B cell (primary cell): ENCODE measurements at regions of chr5 and their contacts with region 1.

Region 1: DNA sequence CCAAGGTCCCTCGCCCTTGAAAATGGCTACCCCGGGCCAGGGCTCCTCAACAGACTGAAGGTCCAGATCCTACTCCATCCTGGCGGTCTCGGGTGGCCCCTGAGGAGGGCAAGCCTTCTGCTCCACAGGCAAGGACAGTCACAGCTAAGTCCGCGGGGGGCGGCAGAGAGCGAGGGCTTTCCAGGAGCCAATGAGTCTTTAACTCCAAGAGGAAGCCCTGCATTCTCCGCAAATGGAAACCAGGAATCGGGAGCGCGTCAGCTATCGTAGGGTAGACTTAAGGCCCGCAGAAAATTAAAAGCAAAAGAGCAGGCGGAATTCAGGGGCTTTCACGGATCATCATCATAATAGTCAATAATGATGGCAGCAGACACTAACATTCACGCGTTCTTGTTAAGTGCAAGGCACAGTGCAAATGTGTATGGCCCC is 87.8 kb upstream of the TNFAIP8 start:
- DNase-seq: peak; percentile 94
- ATAC-seq: peak; percentile 63
- H3K4me3 ChIP-seq: peak overlapping the region; percentile 79 to 99 (median 96)
- H3K4me3 Mint-ChIP-seq: peak overlapping the region; percentile 98
- H3K27ac ChIP-seq: peak overlapping the region; percentile 83 to 91
- H3K27ac Mint-ChIP-seq: peak overlapping the region; percentile 95
- H3K4me1 ChIP-seq: peaks cover 39 to 40% of the 10 kb centered on the region in 2 donors
- H3K4me1 Mint-ChIP-seq: peaks cover 51% of the 10 kb centered on the region
- H3K27me3 ChIP-seq: no peaks in the 10 kb centered on the region
- H3K27me3 Mint-ChIP-seq: no peaks in the 10 kb centered on the region
- CTCF ChIP-seq: peak; percentile 38

Region 2: GRCh38 chr5:118628660-118629354 is 639.2 kb before region 1 on chr5:
- CTCF ChIA-PET with region 1: no interaction called
- POLR2A ChIA-PET with region 1: no interaction called
- intact Hi-C with region 1: no loop called
- DNase-seq: no peak
- ATAC-seq: no peak
- H3K4me3 ChIP-seq: no peak overlapping the region
- H3K4me3 Mint-ChIP-seq: no peak overlapping the region
- H3K27ac ChIP-seq: no peak overlapping the region
- H3K27ac Mint-ChIP-seq: no peak overlapping the region
- H3K4me1 ChIP-seq: no peaks in the 10 kb centered on the region
- H3K4me1 Mint-ChIP-seq: no peaks in the 10 kb centered on the region
- H3K27me3 ChIP-seq: no peaks in the 10 kb centered on the region
- H3K27me3 Mint-ChIP-seq: no peaks in the 10 kb centered on the region
- CTCF ChIP-seq: no peak

Region 3: DNA sequence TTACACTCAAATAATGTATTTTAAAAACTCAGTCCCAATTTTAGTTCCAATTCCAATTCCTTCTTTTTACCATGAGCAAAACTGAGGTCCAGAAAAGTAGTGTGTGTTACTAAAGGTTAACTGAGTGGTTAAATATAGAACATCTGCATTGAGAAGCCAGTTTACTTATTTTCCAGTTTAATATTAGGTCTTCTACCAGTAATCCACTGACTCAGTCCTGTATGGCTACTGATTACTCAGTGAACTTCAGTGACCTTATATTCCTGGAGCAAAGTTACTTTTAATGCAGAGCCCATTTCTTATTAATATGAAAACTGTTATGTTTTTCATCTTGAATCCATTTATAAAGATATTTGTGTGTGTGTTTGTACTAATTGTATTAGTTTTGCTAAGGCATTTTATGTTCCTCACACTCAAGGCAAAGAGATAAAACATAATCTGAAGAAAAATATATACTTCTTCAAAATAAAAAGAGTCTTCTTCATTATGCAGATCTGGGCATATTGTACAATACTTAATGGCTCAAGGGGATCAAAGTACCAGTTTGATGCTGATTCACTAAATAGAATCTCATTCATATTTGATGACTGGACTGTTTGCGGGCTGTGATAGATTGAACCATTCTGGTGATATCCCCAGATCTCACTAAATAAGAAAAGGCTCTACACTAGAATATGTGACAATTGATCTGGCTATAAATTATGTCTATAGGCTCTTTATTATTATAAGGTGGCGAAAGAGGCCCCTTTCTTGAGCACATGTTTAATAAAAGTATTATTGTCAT is 136.2 kb before region 1 on chr5:
- CTCF ChIA-PET with region 1: no interaction called
- POLR2A ChIA-PET with region 1: no interaction called
- intact Hi-C with region 1: no loop called
- DNase-seq: no peak
- ATAC-seq: no peak
- H3K4me3 ChIP-seq: no peak overlapping the region
- H3K4me3 Mint-ChIP-seq: no peak overlapping the region
- H3K27ac ChIP-seq: no peak overlapping the region
- H3K27ac Mint-ChIP-seq: no peak overlapping the region
- H3K4me1 ChIP-seq: no peaks in the 10 kb centered on the region
- H3K4me1 Mint-ChIP-seq: no peaks in the 10 kb centered on the region
- H3K27me3 ChIP-seq: no peaks in the 10 kb centered on the region
- H3K27me3 Mint-ChIP-seq: no peaks in the 10 kb centered on the region
- CTCF ChIP-seq: no peak

Region 4: DNA sequence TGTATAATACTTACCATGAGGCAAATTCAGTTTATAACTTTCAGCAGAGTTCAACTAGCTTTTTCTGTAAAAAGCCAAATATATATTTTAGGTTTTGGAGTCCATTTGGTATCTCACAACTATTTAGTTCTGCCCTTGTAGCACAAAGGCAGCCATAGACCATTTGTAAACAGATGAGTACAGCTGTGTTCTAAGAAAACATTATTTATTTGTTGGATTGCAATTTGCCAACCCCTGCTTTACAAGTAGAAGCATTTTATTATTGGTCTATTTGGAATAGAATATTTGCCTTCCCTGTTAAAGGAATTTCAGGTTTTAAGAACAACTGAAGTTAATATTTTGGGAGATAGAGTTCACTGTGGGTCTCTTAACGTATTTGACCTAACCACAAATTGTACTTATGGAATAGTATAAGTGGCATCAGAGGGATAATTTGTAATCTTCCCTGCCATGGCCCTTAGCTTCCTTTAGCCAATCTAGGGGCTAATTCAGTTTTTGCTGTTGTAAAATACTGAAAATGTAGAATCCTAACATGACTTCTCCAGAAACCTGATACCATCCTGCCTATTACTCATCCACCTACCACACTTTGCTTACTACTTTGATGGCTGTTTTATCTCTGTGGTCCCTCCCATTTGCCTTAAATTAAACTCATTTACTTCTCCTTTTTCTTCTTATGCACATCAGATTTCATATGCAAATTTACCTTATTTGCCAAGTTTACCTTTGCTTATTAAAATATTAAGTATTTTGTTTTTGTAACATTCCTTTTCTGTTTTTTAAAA is 87.9 kb before region 1 on chr5:
- CTCF ChIA-PET with region 1: no interaction called
- POLR2A ChIA-PET with region 1: no interaction called
- intact Hi-C with region 1: no loop called
- DNase-seq: no peak
- ATAC-seq: no peak
- H3K4me3 ChIP-seq: no peak overlapping the region
- H3K4me3 Mint-ChIP-seq: no peak overlapping the region
- H3K27ac ChIP-seq: no peak overlapping the region
- H3K27ac Mint-ChIP-seq: peak overlapping the region; percentile 22
- H3K4me1 ChIP-seq: peaks cover 3 to 18% of the 10 kb centered on the region in 2 donors
- H3K4me1 Mint-ChIP-seq: peaks cover 19% of the 10 kb centered on the region
- H3K27me3 ChIP-seq: no peaks in the 10 kb centered on the region
- H3K27me3 Mint-ChIP-seq: no peaks in the 10 kb centered on the region
- CTCF ChIP-seq: no peak

Region 5: DNA sequence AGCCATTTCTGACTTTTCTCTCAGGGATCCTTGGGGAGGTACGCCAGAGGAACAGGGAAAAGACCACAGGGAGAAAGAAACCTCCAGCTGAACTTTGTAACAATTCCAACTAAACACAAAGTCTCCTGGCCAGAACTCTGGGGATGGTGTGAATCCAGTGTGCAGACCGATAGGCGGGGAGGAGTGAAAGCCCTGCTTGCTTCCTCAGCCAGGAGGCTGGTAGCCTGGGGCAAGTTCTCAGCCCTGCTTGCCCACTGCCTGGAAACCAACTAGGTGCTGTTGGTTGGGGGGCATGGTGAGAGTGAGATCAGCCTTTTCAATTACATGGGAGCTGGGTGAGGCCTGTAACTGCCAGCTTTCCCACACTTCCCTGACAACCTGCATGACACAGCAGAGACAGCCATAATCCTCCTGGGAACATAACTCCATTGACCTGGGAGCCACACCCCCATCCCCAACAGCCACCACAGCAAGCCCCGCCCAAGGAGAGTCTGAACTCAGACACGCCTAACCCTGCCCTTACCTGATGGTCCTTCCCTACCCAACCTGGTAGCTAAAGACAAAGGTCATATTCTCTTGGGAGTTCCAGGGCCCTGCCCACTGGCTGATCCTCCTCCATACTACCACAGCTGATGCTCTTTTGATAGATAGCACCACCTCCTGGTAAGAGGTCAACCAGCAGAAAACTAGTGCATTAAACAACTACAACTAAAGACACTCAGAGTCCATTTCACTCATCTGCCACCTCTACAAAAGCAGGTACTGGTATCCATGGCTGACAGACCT is 12.2 kb before region 1 on chr5:
- CTCF ChIA-PET with region 1: no interaction called
- POLR2A ChIA-PET with region 1: no interaction called
- intact Hi-C with region 1: no loop called
- DNase-seq: peak; percentile 24
- ATAC-seq: no peak
- H3K4me3 ChIP-seq: no peak overlapping the region
- H3K4me3 Mint-ChIP-seq: no peak overlapping the region
- H3K27ac ChIP-seq: no peak overlapping the region
- H3K27ac Mint-ChIP-seq: peak overlapping the region; percentile 26
- H3K4me1 ChIP-seq: no peaks in the 10 kb centered on the region
- H3K4me1 Mint-ChIP-seq: peaks cover 3% of the 10 kb centered on the region
- H3K27me3 ChIP-seq: no peaks in the 10 kb centered on the region
- H3K27me3 Mint-ChIP-seq: no peaks in the 10 kb centered on the region
- CTCF ChIP-seq: peak; percentile 8

Region 6: DNA sequence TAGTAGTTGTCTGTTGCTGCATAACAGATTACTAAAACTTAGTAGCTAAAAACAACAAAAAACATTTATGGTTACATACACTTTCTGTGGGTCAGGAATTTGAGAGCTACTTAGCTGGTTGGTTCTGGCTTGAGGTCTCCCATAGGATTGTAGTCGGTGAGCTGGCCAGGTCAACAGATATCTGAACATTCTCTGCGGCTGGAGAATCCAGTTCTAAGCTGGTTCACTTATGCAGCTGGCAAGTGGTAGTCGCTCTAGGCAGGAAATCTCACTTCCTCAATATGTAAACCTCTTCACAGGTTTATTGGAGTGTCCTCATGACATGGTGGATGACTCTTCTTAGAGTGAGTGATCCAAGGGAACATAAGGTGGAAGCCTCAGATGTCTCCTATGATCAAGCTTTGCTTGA is 22.2 kb after region 1 on chr5:
- CTCF ChIA-PET with region 1: interaction called, 15 read pairs
- POLR2A ChIA-PET with region 1: interaction called, 7 read pairs
- intact Hi-C with region 1: no loop called
- DNase-seq: peak; percentile 78
- ATAC-seq: peak; percentile 88
- H3K4me3 ChIP-seq: peak overlapping the region in 3 of 5 experiments; percentile 13 to 20 (median 18)
- H3K4me3 Mint-ChIP-seq: peak overlapping the region; percentile 65
- H3K27ac ChIP-seq: peak overlapping the region; percentile 35 to 74
- H3K27ac Mint-ChIP-seq: peak overlapping the region; percentile 90
- H3K4me1 ChIP-seq: peaks cover 70 to 76% of the 10 kb centered on the region in 2 donors
- H3K4me1 Mint-ChIP-seq: peaks cover 83% of the 10 kb centered on the region
- H3K27me3 ChIP-seq: no peaks in the 10 kb centered on the region
- H3K27me3 Mint-ChIP-seq: no peaks in the 10 kb centered on the region
- CTCF ChIP-seq: no peak

Region 7: DNA sequence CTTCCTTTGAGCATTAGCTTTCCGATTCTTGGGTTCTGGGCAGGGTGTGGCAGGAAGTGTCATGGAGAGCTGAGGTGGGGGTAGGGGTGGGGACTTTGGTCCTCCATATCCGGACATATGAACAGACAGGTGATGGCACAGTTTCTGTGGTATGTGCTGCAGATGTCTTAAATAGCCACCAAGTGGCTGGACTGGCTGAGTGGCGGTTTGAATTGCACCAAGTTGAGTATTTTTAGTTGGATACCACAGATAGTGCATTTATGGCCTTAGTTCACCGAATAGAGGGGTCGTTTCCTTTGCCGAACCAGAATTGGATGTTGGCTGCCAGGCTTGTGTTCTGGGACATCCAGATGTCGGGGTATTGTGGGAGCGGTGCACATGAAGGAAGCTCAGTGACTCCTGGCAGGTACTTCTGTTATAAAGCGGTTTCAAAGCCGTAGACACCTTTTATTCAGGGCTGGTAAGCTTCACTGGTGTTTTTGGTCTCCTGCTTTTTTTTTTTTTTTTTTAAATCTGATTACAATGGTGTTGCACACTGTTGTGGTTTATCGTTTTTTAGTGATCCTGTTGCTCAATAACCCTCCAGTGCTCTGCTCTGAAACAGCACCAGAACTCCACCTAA is 72.7 kb after region 1 on chr5:
- CTCF ChIA-PET with region 1: interaction called, 7 read pairs
- POLR2A ChIA-PET with region 1: interaction called, 3 read pairs
- intact Hi-C with region 1: loop called (anchors 1 kb)
- DNase-seq: peak; percentile 68
- ATAC-seq: peak; percentile 22
- H3K4me3 ChIP-seq: peak overlapping the region in 4 of 5 experiments; percentile 5 to 45 (median 22)
- H3K4me3 Mint-ChIP-seq: peak overlapping the region; percentile 85
- H3K27ac ChIP-seq: peak overlapping the region; percentile 87 to 91
- H3K27ac Mint-ChIP-seq: peak overlapping the region; percentile 95
- H3K4me1 ChIP-seq: peaks cover 95 to 96% of the 10 kb centered on the region in 2 donors
- H3K4me1 Mint-ChIP-seq: peaks cover 94% of the 10 kb centered on the region
- H3K27me3 ChIP-seq: no peaks in the 10 kb centered on the region
- H3K27me3 Mint-ChIP-seq: no peaks in the 10 kb centered on the region
- CTCF ChIP-seq: no peak

Region 8: GRCh38 chr5:119452373-119453039 is 184.5 kb after region 1 on chr5 and contains the start of gene HSD17B4:
- CTCF ChIA-PET with region 1: no interaction called
- POLR2A ChIA-PET with region 1: no interaction called
- intact Hi-C with region 1: loop called (anchors 1 kb)
- DNase-seq: peak; percentile 92
- ATAC-seq: peak; percentile 93
- H3K4me3 ChIP-seq: peak within 1 kb of the TSS; percentile 69 to 89 (median 77)
- H3K4me3 Mint-ChIP-seq: peak within 1 kb of the TSS; percentile 96
- H3K27ac ChIP-seq: peak within 1 kb of the TSS; percentile 86 to 87
- H3K27ac Mint-ChIP-seq: peak within 1 kb of the TSS; percentile 97
- H3K4me1 ChIP-seq: peaks cover 32% of the 10 kb centered on the region in 2 donors
- H3K4me1 Mint-ChIP-seq: peaks cover 53% of the 10 kb centered on the region
- H3K27me3 ChIP-seq: no peaks in the 10 kb centered on the region
- H3K27me3 Mint-ChIP-seq: no peaks in the 10 kb centered on the region
- CTCF ChIP-seq: no peak
- total RNA-seq, gene HSD17B4: 112 and 114 TPM in 2 replicates